Right ventricle myocardium inferior (tissue), 1 donor: ENCODE measurements at regions of chr6 and their contacts with region 1.

Region 1: GRCh38 chr6:17971128-17972073 is 16.0 kb downstream of the KIF13A start:
- DNase-seq: no peak
- ATAC-seq: no peak

Region 2: GRCh38 chr6:17932330-17932852 is 39.0 kb before region 1 on chr6:
- intact Hi-C with region 1: loop called (anchors 5 kb)
- DNase-seq: peak; percentile 64
- ATAC-seq: peak; percentile 95